HepG2 (cell line): ENCODE measurements at regions of chr2 and their contacts with region 1.

Region 1: GRCh38 chr2:178469219-178469849 is 9.1 kb downstream of the FKBP7 start:
- DNase-seq: peak; percentile 79
- ATAC-seq: peak; percentile 95
- H3K4me3 ChIP-seq: peak overlapping the region in 2 of 3 experiments; percentile 6 to 16; a peak in 3 of 6 replicates
- H3K27ac ChIP-seq: peak overlapping the region; percentile 84
- H3K4me1 ChIP-seq: peaks cover 23% of the 10 kb centered on the region
- H3K27me3 ChIP-seq: no peaks in the 10 kb centered on the region
- CTCF ChIP-seq: no peak
- EP300 ChIP-seq: peak; percentile 90 to 92
- POLR2A ChIP-seq: no peak
- RAD21 ChIP-seq: no peak

Region 2: DNA sequence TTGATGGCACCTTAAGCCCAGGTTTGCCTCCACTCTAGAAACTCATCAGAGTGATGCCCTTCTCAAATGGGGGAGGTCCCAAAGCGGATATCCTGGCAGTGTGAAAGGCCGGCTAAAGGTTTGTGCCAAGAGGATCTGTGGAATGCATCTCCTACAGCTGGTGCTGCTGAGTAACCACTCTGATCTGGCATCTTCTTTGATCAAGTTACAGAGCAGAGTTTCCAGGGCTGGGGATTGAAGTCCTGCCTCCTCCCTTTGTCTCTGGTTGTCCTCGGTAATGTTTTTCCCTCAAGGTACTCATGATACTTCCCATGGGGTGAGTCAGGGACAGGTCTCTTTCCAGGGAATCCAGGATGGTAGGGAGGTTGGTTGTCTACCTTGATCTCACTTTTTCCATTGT is 42.9 kb before region 1 on chr2:
- CTCF ChIA-PET with region 1: no interaction called
- POLR2A ChIA-PET with region 1: interaction called, 11 read pairs
- in situ Hi-C with region 1: no loop called
- intact Hi-C with region 1: no loop called
- DNase-seq: no peak
- ATAC-seq: no peak
- H3K4me3 ChIP-seq: no peak overlapping the region
- H3K27ac ChIP-seq: no peak overlapping the region
- H3K4me1 ChIP-seq: peaks cover 25% of the 10 kb centered on the region
- H3K27me3 ChIP-seq: no peaks in the 10 kb centered on the region
- CTCF ChIP-seq: no peak
- EP300 ChIP-seq: no peak
- POLR2A ChIP-seq: no peak
- RAD21 ChIP-seq: no peak